MCF 10A (cell line): ENCODE measurements at regions of chr4 and their contacts with region 1.

Region 1: GRCh38 chr4:15681207-15682015 is at the start of gene FAM200B:
- DNase-seq: peak; percentile 100
- H3K4me3 Mint-ChIP-seq: peak within 1 kb of the TSS; percentile 97
- H3K27ac Mint-ChIP-seq: peak within 1 kb of the TSS; percentile 98
- H3K4me1 Mint-ChIP-seq: peaks cover 40% of the 10 kb centered on the region
- H3K27me3 Mint-ChIP-seq: no peaks in the 10 kb centered on the region
- CTCF ChIP-seq: no peak
- total RNA-seq, gene FAM200B: 33.6 and 46.5 TPM in 2 replicates

Region 2: GRCh38 chr4:15649914-15650545 is 31.4 kb before region 1 on chr4:
- CTCF ChIA-PET with region 1: interaction called, 6 read pairs
- POLR2A ChIA-PET with region 1: interaction called, 410 read pairs
- intact Hi-C with region 1: loop called (anchors 1 kb)
- DNase-seq: peak; percentile 71
- H3K4me3 Mint-ChIP-seq: no peak overlapping the region
- H3K27ac Mint-ChIP-seq: no peak overlapping the region
- H3K4me1 Mint-ChIP-seq: peaks cover 20% of the 10 kb centered on the region
- H3K27me3 Mint-ChIP-seq: no peaks in the 10 kb centered on the region
- CTCF ChIP-seq: peak; percentile 66

Region 3: GRCh38 chr4:15665753-15666365 is 15.6 kb before region 1 on chr4:
- CTCF ChIA-PET with region 1: interaction called, 6 read pairs
- POLR2A ChIA-PET with region 1: interaction called, 184 read pairs
- intact Hi-C with region 1: no loop called
- DNase-seq: peak; percentile 96
- H3K4me3 Mint-ChIP-seq: no peak overlapping the region
- H3K27ac Mint-ChIP-seq: peak overlapping the region; percentile 87
- H3K4me1 Mint-ChIP-seq: peaks cover 30% of the 10 kb centered on the region
- H3K27me3 Mint-ChIP-seq: no peaks in the 10 kb centered on the region
- CTCF ChIP-seq: no peak

Region 4: GRCh38 chr4:15695240-15695699 is 13.9 kb after region 1 on chr4:
- CTCF ChIA-PET with region 1: no interaction called
- POLR2A ChIA-PET with region 1: interaction called, 21 read pairs
- intact Hi-C with region 1: no loop called
- DNase-seq: peak; percentile 96
- H3K4me3 Mint-ChIP-seq: no peak overlapping the region
- H3K27ac Mint-ChIP-seq: peak overlapping the region; percentile 37
- H3K4me1 Mint-ChIP-seq: peaks cover 25% of the 10 kb centered on the region
- H3K27me3 Mint-ChIP-seq: no peaks in the 10 kb centered on the region
- CTCF ChIP-seq: no peak